Astrocyte of the cerebellum (primary cell): ENCODE measurements at regions of chr17 and their contacts with region 1.

Region 1: DNA sequence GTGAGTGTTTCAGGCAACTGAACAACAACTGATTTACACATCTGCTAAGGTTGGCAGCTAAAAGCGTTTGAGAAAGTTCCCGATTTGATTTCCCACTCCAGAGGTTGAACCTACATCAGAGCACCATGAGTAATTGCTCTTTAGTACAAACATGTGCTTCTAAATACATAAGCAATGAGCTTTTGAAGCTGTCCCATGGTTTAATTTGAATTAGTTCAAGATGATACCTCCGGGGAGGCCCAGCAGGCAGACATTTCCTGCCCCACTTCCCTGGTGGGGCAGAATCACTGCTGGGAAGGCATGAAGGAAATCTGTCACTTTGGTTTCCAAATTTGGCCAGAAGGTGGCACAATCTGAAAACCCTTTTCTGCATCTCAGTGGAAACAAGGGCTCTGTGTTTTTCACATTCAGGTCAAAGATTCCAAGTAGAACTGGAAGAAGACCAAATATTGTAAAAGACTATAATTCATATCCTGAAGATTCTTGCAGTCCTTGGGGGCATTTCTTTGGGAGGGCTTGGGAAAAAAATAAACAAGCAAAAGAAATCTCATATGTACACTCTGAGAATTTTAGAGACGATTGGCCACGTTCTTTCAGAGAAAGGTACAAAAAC is 176.2 kb upstream of the FAM20A start:
- DNase-seq: peak; percentile 62
- H3K4me3 ChIP-seq: no peak overlapping the region
- CTCF ChIP-seq: peak; percentile 77

Region 2: GRCh38 chr17:68646701-68647104 is 130.6 kb before region 1 on chr17:
- in situ Hi-C with region 1: no loop called
- DNase-seq: no peak
- H3K4me3 ChIP-seq: no peak overlapping the region
- CTCF ChIP-seq: no peak

Region 3: DNA sequence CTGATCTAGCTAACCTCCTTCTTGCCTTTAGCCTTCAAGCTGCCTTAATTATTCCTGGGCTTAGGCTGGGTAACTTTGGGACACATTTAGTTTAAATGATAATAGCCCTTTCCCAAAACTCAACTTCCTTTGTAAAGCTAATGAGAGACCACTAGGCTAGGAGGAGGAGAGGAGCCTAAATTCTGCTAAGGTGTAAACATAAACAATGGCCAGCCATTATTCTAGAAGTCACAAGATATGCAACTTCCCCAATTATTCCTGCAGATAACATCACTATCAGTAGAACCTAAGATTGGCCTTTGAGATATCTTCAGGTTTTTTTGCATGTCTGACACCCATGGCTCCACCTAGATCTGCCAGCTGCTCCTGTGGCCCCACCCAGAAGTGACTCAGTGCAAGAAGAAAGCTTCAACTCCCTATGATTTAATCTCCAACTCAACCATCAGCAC is 45.0 kb before region 1 on chr17:
- in situ Hi-C with region 1: no loop called
- DNase-seq: no peak
- H3K4me3 ChIP-seq: no peak overlapping the region
- CTCF ChIP-seq: no peak

Region 4: GRCh38 chr17:68835071-68835470 is 57.7 kb after region 1 on chr17:
- in situ Hi-C with region 1: no loop called
- DNase-seq: no peak
- H3K4me3 ChIP-seq: no peak overlapping the region
- CTCF ChIP-seq: no peak

Region 5: GRCh38 chr17:68861602-68862001 is 84.3 kb after region 1 on chr17:
- in situ Hi-C with region 1: no loop called
- DNase-seq: no peak
- H3K4me3 ChIP-seq: no peak overlapping the region
- CTCF ChIP-seq: no peak

Region 6: GRCh38 chr17:69093279-69093789 is 316.0 kb after region 1 on chr17:
- in situ Hi-C with region 1: loop called (anchors 5 kb)
- DNase-seq: no peak
- H3K4me3 ChIP-seq: no peak overlapping the region
- CTCF ChIP-seq: no peak